Endothelial cell of umbilical vein (primary cell): ENCODE measurements at regions of chr11 and their contacts with region 1.

Region 1: GRCh38 chr11:86456052-86456939 is 81.6 kb downstream of the CCDC81 start:
- DNase-seq: peak; percentile 87
- H3K4me3 ChIP-seq: no peak overlapping the region
- H3K27ac ChIP-seq: peak overlapping the region; percentile 72
- H3K4me1 ChIP-seq: peaks cover 53% of the 10 kb centered on the region
- H3K27me3 ChIP-seq: no peaks in the 10 kb centered on the region
- CTCF ChIP-seq: peak; percentile 80 to 86
- POLR2A ChIP-seq: no peak

Region 2: GRCh38 chr11:86360775-86361395 is 95.4 kb before region 1 on chr11:
- CTCF ChIA-PET with region 1: interaction called, 55 read pairs
- POLR2A ChIA-PET with region 1: no interaction called
- dilution Hi-C with region 1: no loop called
- intact Hi-C with region 1: loop called (anchors 1 kb)
- DNase-seq: peak; percentile 61
- H3K4me3 ChIP-seq: no peak overlapping the region
- H3K27ac ChIP-seq: peak overlapping the region; percentile 34
- H3K4me1 ChIP-seq: peaks cover 7% of the 10 kb centered on the region
- H3K27me3 ChIP-seq: no peaks in the 10 kb centered on the region
- CTCF ChIP-seq: peak; percentile 19 to 33
- POLR2A ChIP-seq: no peak

Region 3: GRCh38 chr11:86440305-86440716 is 16.0 kb before region 1 on chr11:
- CTCF ChIA-PET with region 1: no interaction called
- POLR2A ChIA-PET with region 1: no interaction called
- dilution Hi-C with region 1: no loop called
- intact Hi-C with region 1: no loop called
- DNase-seq: no peak
- H3K4me3 ChIP-seq: no peak overlapping the region
- H3K27ac ChIP-seq: no peak overlapping the region
- H3K4me1 ChIP-seq: peaks cover 7% of the 10 kb centered on the region
- H3K27me3 ChIP-seq: no peaks in the 10 kb centered on the region
- CTCF ChIP-seq: no peak
- POLR2A ChIP-seq: no peak

Region 4: GRCh38 chr11:86523738-86524619 is 67.7 kb after region 1 on chr11:
- CTCF ChIA-PET with region 1: interaction called, 13 read pairs
- POLR2A ChIA-PET with region 1: interaction called, 8 read pairs
- dilution Hi-C with region 1: no loop called
- intact Hi-C with region 1: loop called (anchors 1 kb)
- DNase-seq: peak; percentile 99
- H3K4me3 ChIP-seq: peak overlapping the region in 1 of 3 experiments; percentile 14
- H3K27ac ChIP-seq: peak overlapping the region; percentile 93
- H3K4me1 ChIP-seq: peaks cover 46% of the 10 kb centered on the region
- H3K27me3 ChIP-seq: no peaks in the 10 kb centered on the region
- CTCF ChIP-seq: no peak
- POLR2A ChIP-seq: peak; percentile 54

Region 5: GRCh38 chr11:86592659-86593451 is 136.6 kb after region 1 on chr11:
- CTCF ChIA-PET with region 1: interaction called, 7 read pairs
- POLR2A ChIA-PET with region 1: interaction called, 3 read pairs
- dilution Hi-C with region 1: no loop called
- intact Hi-C with region 1: loop called (anchors 1 kb)
- DNase-seq: peak; percentile 99
- H3K4me3 ChIP-seq: no peak overlapping the region
- H3K27ac ChIP-seq: peak overlapping the region; percentile 99
- H3K4me1 ChIP-seq: peaks cover 60% of the 10 kb centered on the region
- H3K27me3 ChIP-seq: no peaks in the 10 kb centered on the region
- CTCF ChIP-seq: no peak
- POLR2A ChIP-seq: peak; percentile 12

Region 6: DNA sequence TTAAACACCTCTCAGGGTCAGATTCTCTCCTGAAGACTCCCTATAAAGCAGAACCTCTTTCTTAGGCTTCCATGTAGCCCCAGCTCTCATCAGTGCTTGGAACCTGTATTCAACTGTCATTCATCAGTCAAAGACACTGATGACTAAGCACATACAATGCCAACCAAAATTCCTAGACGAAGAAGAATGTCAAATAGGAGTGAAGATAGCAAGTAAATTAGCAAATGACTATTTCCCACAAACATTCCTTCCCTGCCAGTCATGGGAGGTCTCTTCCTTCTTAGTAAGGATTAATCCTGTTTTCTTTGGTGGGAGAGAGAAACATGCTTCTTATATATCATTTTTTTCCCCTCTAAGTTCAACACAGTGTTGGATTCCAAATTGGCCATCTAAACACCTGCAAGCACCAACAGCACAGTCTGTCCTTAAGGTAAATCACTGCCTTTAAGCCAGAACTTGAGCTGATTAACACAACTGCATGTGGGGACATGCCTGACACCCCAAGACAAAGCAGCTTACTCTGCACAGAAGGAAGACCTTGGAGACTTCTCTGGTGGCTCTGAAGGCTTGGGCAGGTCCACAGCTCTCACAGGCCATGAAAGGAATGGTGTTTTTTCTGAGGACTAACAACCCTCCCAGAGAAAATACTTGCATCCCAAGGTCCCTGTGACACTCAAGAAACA is 263.6 kb after region 1 on chr11:
- CTCF ChIA-PET with region 1: interaction called, 4 read pairs
- POLR2A ChIA-PET with region 1: no interaction called
- dilution Hi-C with region 1: no loop called
- intact Hi-C with region 1: loop called (anchors 5 kb)
- DNase-seq: peak; percentile 87
- H3K4me3 ChIP-seq: no peak overlapping the region
- H3K27ac ChIP-seq: peak overlapping the region; percentile 87
- H3K4me1 ChIP-seq: peaks cover 31% of the 10 kb centered on the region
- H3K27me3 ChIP-seq: no peaks in the 10 kb centered on the region
- CTCF ChIP-seq: no peak
- POLR2A ChIP-seq: no peak

Region 7: GRCh38 chr11:86818466-86819192 is 362.3 kb after region 1 on chr11:
- CTCF ChIA-PET with region 1: interaction called, 36 read pairs
- POLR2A ChIA-PET with region 1: no interaction called
- dilution Hi-C with region 1: no loop called
- intact Hi-C with region 1: loop called (anchors 1 kb)
- DNase-seq: peak; percentile 84
- H3K4me3 ChIP-seq: no peak overlapping the region
- H3K27ac ChIP-seq: peak overlapping the region; percentile 77
- H3K4me1 ChIP-seq: peaks cover 53% of the 10 kb centered on the region
- H3K27me3 ChIP-seq: no peaks in the 10 kb centered on the region
- CTCF ChIP-seq: peak; percentile 41 to 45
- POLR2A ChIP-seq: no peak

Region 8: DNA sequence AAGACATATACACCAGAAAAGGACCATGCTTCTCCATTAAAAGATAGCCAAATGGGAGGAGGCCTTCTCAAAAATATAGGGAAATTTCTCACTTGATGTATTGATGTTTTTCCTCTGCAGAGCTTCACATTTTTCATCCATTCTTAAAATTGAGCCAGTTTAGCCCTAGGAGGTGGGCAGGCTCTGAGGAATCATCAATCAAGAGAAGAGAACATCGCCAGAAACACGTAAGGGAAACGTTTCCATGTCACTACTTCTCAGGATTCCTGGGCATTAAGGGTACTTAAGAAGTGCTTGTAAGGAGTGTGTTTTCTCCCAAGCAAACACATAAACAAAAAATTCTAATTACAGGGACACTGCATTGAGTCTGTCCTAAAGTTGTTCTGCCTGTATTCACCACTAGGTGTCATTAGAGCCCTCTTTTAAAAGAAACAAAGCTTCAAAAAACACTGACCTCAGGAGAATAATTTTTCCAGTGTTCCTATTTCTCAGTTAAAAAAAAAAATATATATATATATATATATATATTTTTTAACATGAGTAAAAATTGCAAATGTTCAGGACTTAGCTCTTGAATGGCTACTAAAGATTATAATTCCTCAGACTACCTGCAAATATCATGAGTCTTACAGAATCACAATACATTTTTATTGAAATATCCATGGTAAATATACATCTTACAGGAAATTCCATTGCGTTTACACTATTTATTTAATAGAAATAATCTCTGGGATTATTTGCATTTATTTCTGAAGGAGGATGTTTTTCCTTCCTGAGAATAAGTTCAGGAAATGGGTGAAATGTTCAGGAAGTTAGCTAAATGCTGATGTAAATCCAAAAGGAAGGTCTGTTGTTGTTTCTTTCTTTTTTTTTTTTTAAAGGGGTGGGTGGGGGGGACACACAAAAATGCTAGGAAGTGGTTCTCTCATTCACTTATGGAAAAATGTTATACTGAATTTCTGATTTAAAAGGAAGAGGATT is 482.9 kb after region 1 on chr11:
- CTCF ChIA-PET with region 1: no interaction called
- POLR2A ChIA-PET with region 1: no interaction called
- dilution Hi-C with region 1: no loop called
- intact Hi-C with region 1: loop called (anchors 5 kb)
- DNase-seq: peak; percentile 85
- H3K4me3 ChIP-seq: peak overlapping the region in 1 of 3 experiments; percentile 25
- H3K27ac ChIP-seq: peak overlapping the region; percentile 89
- H3K4me1 ChIP-seq: peaks cover 73% of the 10 kb centered on the region
- H3K27me3 ChIP-seq: no peaks in the 10 kb centered on the region
- CTCF ChIP-seq: peak; percentile 41 to 49
- POLR2A ChIP-seq: peak; percentile 1

Region 9: GRCh38 chr11:87265132-87265531 is 808.8 kb after region 1 on chr11:
- CTCF ChIA-PET with region 1: no interaction called
- POLR2A ChIA-PET with region 1: no interaction called
- dilution Hi-C with region 1: no loop called
- intact Hi-C with region 1: no loop called
- DNase-seq: peak; percentile 52
- H3K4me3 ChIP-seq: no peak overlapping the region
- H3K27ac ChIP-seq: peak overlapping the region; percentile 13
- H3K4me1 ChIP-seq: peaks cover 39% of the 10 kb centered on the region
- H3K27me3 ChIP-seq: no peaks in the 10 kb centered on the region
- CTCF ChIP-seq: no peak
- POLR2A ChIP-seq: no peak